MCF 10A (cell line): ENCODE measurements at regions of chr11 and their contacts with region 1.

Region 1: GRCh38 chr11:7072401-7073028 is 16.3 kb upstream of the RBMXL2 start:
- DNase-seq: no peak
- H3K4me3 Mint-ChIP-seq: no peak overlapping the region
- H3K27ac Mint-ChIP-seq: no peak overlapping the region
- H3K4me1 Mint-ChIP-seq: no peaks in the 10 kb centered on the region
- H3K27me3 Mint-ChIP-seq: peaks cover 13% of the 10 kb centered on the region
- CTCF ChIP-seq: no peak

Region 2: DNA sequence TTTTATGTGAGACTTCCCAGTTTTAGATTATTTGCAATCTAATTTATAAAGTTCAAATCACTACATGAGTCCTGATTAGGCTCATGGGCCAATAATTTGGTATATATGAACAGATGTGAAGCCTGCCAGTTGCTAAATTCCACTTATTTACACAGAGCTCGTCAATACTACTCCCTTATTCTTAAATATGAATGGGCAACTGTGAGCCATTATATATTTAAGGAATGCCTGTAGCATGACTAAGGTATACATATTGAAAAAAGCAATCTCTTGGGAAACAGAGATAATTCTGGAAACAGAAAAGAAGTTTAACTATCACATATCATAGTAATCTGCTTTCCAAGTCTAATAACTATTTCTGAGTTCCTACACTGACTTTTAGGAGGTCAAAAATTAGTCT is 43.3 kb after region 1 on chr11:
- CTCF ChIA-PET with region 1: no interaction called
- POLR2A ChIA-PET with region 1: no interaction called
- intact Hi-C with region 1: loop called (anchors 1 kb)
- DNase-seq: no peak
- H3K4me3 Mint-ChIP-seq: no peak overlapping the region
- H3K27ac Mint-ChIP-seq: no peak overlapping the region
- H3K4me1 Mint-ChIP-seq: no peaks in the 10 kb centered on the region
- H3K27me3 Mint-ChIP-seq: peaks cover 35% of the 10 kb centered on the region
- CTCF ChIP-seq: no peak